ENCODE measurements at regions of chr1 and their contacts with region 1.

Region 1: DNA sequence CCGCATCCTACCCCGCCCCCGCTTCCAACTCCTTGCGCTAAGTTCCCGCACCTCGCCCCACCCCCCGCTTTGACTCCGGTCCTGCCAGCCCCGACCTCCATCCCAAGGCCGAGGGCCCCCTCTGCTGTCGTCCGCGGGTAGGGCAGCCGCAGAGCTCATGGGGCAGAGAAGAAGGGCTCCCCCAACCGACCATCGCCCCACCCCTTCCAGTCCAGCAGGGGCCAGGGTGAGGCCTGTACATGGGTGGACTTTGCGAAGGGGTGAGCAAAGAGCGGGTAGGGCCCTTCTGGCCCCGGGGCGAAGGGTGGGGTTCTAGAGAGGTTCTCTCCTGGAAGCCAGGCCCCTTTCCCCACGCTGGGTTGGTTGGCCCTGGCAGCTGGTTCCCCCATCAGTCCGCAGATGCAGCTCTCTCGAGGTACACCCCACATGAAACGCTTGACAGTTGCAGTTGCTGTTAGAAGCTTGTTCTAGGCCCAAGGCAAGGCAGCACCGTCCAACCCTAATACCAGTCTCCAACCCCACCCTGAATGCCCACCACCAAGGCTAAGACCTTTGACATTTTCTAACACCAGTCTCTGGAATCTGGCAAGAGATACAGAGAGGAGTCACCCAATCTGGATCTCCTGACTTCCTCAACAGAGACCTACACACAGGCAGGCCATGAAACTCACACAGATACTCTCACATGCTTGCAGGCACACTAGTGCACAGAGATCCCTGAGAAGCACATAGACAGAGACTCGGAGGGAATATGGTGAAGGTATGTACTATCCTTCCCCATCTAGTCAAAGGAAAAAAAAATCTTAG is 25.3 kb upstream of the ADGRB2 start:
- DNase-seq: peak; percentile 97
- H3K4me3 ChIP-seq: peak overlapping the region; percentile 44 to 67 (median 60)
- H3K27ac ChIP-seq: peak overlapping the region; percentile 80 to 84 (median 82)
- H3K4me1 ChIP-seq: peaks cover 0 to 9% (median 4%) of the 10 kb centered on the region in 4 donors
- H3K27me3 ChIP-seq: no peaks in the 10 kb centered on the region
- CTCF ChIP-seq: peak; percentile 93 to 98 (median 96)
- EP300 ChIP-seq: no peak
- POLR2A ChIP-seq: no peak

Region 2: DNA sequence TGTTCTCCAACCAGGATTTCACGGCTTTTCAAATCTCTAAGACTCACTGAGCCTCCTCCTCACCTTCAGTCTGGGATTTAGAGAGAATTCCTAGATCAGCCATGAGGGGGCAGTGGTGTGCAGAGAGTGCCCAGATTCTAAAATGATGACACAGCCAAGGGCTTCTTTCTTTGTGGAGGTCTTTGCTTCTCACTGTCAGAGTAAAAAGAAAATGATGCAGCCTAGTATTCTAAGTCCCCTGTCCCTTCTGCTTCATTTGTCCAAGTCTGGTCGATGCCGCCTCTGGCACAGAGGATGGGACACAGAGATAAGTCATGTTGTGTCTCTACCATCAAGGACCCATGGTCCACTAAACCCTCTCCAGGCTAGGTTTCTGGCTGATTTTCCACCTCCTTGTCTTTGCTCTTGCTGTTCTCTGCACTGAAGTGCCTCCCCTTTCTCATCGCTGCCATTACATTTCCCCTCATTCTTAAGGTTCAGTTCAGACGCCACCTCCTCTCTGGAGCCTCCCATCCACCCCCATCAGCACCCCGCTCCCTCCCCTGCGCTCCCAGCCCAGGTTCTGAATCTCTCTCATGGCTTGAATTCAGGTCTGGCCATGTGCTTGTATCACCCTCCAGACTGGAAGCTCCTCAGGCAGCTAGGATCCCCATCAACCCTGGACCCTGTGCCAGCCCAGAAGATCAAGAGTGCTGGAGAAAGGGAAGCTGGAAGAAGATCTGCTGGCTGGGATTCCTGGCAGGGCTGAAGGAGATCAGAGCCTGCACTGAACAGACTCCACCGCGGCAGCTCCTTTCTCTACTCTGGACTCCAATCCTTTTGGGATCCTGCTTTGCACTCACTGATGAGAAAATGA is 225.1 kb before region 1 on chr1:
- intact Hi-C with region 1: loop called (anchors 5 kb)
- DNase-seq: no peak
- H3K4me3 ChIP-seq: no peak overlapping the region
- H3K27ac ChIP-seq: peak overlapping the region in 3 of 4 donors; percentile 51 to 62 (median 53)
- H3K4me1 ChIP-seq: peaks cover 0 to 13% (median 8%) of the 10 kb centered on the region in 4 donors
- H3K27me3 ChIP-seq: peaks cover 0 to 7% (median 0%) of the 10 kb centered on the region in 3 donors
- CTCF ChIP-seq: peak; percentile 84 to 88 (median 86)
- EP300 ChIP-seq: no peak
- POLR2A ChIP-seq: no peak

Region 3: DNA sequence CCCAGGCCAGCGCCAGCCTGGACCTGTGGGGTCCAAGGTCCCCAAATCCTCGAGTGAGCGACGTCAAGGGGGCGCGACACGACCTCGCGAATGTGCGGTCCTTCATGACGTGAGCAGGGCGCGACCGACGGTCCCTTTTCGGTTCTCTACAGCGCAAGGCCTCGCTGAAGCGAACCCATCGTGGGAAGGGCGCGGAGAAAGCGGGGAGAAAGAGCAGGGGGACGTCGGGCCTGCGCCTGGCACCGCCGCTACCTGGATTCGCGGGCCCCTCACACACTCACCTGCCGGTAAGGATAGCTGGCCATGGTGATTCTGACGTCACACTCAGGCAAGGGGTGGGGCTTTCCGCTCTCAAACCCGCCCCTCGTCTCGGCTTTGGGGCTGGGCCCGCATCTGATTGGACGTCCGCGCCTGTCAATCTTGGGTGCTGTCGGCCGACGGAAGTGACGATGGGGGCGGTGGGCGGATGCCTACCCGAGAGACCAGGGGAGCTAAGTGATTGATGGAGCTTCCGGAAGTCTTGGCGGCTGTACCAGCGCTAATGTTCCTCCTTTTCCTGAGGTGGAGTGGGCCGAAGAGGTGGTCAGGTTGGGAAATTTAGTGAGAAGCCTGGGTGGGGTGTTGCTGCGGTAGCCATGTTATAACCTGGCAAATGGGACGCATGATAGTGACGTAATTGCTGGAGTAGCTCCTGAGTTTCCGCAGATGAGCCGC is 144.7 kb before region 1 on chr1 and contains the start of gene PEF1:
- intact Hi-C with region 1: loop called (anchors 5 kb)
- DNase-seq: peak; percentile 100
- H3K4me3 ChIP-seq: peak within 1 kb of the TSS; percentile 63 to 95 (median 74)
- H3K27ac ChIP-seq: peak within 1 kb of the TSS; percentile 87 to 98 (median 94)
- H3K4me1 ChIP-seq: peaks cover 0 to 53% (median 30%) of the 10 kb centered on the region in 4 donors
- H3K27me3 ChIP-seq: no peaks in the 10 kb centered on the region
- CTCF ChIP-seq: no peak
- EP300 ChIP-seq: peak in 1 of 4 donors; percentile 49
- POLR2A ChIP-seq: peak; percentile 51 to 76
- total RNA-seq, gene PEF1: 52.9 to 87.4 (median 65.7) TPM

Region 4: GRCh38 chr1:31663622-31664452 is 125.6 kb before region 1 on chr1:
- intact Hi-C with region 1: loop called (anchors 1 kb)
- DNase-seq: peak; percentile 82
- H3K4me3 ChIP-seq: no peak overlapping the region
- H3K27ac ChIP-seq: no peak overlapping the region
- H3K4me1 ChIP-seq: peaks cover 0 to 34% (median 23%) of the 10 kb centered on the region in 4 donors
- H3K27me3 ChIP-seq: no peaks in the 10 kb centered on the region
- CTCF ChIP-seq: peak; percentile 95 to 99 (median 96)
- EP300 ChIP-seq: no peak
- POLR2A ChIP-seq: no peak

Region 5: DNA sequence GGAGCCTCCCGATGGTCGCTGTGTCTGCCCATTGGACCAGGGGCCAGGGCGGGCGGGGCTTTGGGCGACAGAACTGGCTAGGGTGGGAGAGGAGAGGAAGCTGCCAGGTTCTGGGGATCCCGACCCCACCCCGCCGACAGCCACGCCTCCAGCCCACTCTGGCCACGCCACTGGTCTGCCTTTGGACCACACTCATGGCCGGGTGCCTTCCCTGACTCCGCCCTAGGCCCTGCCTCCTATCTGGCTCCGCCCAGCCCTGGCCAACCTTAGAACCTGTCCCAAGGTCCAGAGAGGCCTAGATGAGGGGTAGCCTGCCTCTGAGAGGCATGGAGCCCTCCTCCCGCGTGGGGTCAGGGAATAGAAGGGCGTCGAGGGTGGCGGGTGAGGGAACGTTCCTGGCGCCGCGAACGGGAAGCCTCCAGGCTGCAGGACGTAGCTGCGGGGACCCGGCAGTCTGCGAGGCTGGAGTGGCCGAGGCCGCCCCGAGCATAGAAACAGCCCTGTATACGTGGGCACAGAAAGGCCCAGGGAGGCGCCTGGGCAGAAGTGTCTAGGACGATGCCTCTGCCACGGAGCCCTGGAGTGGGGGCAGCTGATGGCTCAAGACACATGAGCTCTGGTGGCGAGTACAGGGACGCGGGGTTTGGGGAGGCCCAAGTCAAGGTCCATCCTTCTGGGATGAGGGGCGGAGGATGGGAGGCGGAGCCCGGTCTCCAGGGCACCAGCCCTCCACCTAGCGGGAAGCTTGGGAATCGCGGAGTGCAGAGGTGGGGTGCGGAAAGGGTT is 74.2 kb before region 1 on chr1:
- intact Hi-C with region 1: loop called (anchors 2 kb)
- DNase-seq: peak; percentile 99
- H3K4me3 ChIP-seq: peak overlapping the region; percentile 20 to 47 (median 38)
- H3K27ac ChIP-seq: peak overlapping the region; percentile 87 to 98 (median 96)
- H3K4me1 ChIP-seq: peaks cover 0 to 56% (median 47%) of the 10 kb centered on the region in 4 donors
- H3K27me3 ChIP-seq: no peaks in the 10 kb centered on the region
- CTCF ChIP-seq: peak; percentile 89 to 97 (median 92)
- EP300 ChIP-seq: no peak
- POLR2A ChIP-seq: peak; percentile 23 to 45

Region 6: DNA sequence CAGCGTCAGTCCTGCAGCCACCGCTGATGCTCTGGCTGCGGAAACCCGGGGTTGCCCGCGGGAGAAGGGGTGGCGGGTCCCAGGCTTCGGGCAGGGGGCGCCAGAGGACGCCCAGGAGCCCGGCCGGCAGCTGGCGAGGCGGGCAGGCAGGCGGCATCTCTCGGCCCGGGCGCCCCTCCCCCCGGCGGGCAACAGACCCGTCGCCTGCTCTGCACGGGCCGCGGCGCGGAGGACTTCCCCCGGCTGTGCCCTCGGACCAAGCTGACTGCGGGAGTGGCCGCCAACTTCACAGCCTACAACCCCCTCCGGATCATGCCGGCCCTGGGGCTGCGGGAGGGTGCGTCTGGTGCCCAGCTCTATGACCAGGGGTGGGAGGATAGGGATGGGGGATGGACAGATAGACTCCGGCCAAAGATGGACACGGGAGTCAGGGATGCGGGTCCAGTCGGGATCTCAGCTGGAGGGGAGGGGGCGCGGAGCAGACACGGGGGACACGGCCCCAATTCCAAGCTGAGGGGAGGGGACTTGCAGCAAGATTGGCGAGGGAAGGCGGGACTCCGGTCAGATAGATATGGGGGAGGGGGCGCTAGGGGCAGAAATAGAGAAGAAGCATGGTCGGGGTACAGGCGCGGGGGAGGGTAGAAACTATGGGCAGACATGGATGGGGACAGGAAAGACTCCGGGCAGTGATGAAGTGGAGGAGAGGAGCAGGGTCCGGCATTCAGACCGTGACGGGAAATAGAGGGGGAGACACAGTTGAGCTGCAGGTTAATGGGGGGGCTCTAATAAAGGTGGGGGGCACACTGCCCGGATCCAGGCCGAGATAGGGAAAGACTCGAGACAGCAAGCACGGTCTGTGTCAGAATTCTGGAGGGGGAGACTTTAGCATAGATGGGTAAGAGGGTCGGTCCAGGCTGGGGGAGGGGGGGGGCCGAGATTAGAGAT is 26.5 kb before region 1 on chr1:
- intact Hi-C with region 1: loop called (anchors 1 kb)
- DNase-seq: peak; percentile 81
- H3K4me3 ChIP-seq: peak overlapping the region; percentile 29 to 59 (median 55)
- H3K27ac ChIP-seq: peak overlapping the region in 1 of 4 donors; percentile 35
- H3K4me1 ChIP-seq: peaks cover 0 to 44% (median 41%) of the 10 kb centered on the region in 4 donors
- H3K27me3 ChIP-seq: peaks cover 0 to 36% (median 13%) of the 10 kb centered on the region in 3 donors
- CTCF ChIP-seq: peak in 2 of 4 experiments; percentile 48 to 72
- EP300 ChIP-seq: no peak
- POLR2A ChIP-seq: no peak